ENCODE measurements at regions of chr7 and their contacts with region 1.

Region 1: GRCh38 chr7:106056513-106057203 is 55.5 kb downstream of the SYPL1 start:
- DNase-seq: peak; percentile 82 to 89 (median 84)
- ATAC-seq: peak; percentile 98
- H3K4me3 ChIP-seq: no peak overlapping the region
- H3K27ac ChIP-seq: no peak overlapping the region
- H3K4me1 ChIP-seq: peaks cover 0 to 4% of the 10 kb centered on the region in 2 experiments; a peak in 2 of 5 replicates
- H3K27me3 ChIP-seq: peaks cover 38 to 70% of the 10 kb centered on the region in 2 experiments
- CTCF ChIP-seq: peak; percentile 93 to 97 (median 97)
- EP300 ChIP-seq: peak; percentile 5; the same call in 1 of the 2 replicates
- POLR2A ChIP-seq: no peak
- RAD21 ChIP-seq: peak; percentile 99 to 100

Region 2: GRCh38 chr7:106166655-106167342 is 110.1 kb after region 1 on chr7:
- CTCF ChIA-PET with region 1: interaction called, 34 read pairs
- POLR2A ChIA-PET with region 1: interaction called, 3 read pairs
- in situ Hi-C with region 1: no loop called
- intact Hi-C with region 1: loop called (anchors 1 kb)
- DNase-seq: peak; percentile 75 to 87 (median 84)
- ATAC-seq: peak; percentile 92
- H3K4me3 ChIP-seq: no peak overlapping the region
- H3K27ac ChIP-seq: no peak overlapping the region
- H3K4me1 ChIP-seq: no peaks in the 10 kb centered on the region
- H3K27me3 ChIP-seq: peaks cover 0 to 18% of the 10 kb centered on the region in 2 experiments; a peak in 2 of 5 replicates
- CTCF ChIP-seq: peak; percentile 79 to 98 (median 92)
- EP300 ChIP-seq: no peak
- POLR2A ChIP-seq: no peak
- RAD21 ChIP-seq: peak; percentile 85 to 92